AG04449 (cell line): ENCODE measurements at regions of chr7 and their contacts with region 1.

Region 1: DNA sequence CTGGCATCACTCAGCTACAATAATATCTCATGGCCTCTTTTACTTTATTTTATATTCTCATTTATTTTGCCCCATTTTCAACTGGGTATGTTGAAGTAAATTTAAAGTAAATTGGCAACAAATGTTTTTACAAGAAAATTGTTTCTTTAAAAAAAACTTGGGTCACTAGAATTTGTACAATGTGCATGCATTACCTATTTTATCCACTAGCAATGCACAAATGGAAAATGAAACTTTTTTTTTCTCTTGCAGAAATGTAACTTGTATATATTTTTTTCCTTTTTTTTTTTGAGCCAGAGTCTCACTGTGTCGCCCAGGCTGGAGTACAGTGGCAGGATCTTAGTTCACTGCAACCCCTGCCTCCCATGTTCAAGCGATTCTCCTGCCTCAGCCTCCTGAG is 10.3 kb upstream of the H2AZ2 start:
- DNase-seq: no peak
- H3K4me3 ChIP-seq: no peak overlapping the region
- CTCF ChIP-seq: no peak

Region 2: DNA sequence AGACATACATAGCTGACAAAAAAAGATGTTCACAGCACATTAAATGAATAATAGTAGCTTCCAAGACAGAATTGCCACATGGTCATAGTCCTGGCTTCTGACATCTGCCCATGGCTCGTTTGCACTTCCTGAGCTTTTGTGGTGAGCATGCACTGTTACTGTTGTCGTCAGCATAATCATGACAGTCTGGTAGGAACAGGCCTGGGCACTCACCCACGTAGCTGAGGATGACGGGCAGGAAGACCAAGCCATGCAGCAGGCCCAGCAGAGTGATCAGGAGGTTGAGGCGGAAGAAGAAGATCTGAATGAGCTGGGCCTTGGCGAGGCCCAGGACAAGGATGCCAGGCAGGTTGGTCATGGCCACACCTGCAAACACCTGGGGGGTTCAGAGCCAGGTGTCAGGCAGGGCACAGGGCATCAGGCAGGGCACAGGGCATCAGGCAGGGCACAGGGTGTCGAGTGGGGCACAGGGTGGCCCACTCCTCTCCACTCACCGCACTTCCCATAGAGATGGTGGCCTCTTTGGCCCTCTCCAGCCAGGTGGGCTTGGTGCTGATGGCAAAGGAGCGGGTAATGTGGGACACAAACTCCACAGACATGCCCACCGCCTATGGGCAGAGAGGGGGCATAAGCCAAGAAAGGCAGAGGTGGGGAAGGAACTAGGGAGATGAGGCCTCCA is 342.4 kb before region 1 on chr7:
- CTCF ChIA-PET with region 1: no interaction called
- POLR2A ChIA-PET with region 1: no interaction called
- DNase-seq: no peak
- H3K4me3 ChIP-seq: no peak overlapping the region
- CTCF ChIP-seq: no peak

Region 3: GRCh38 chr7:44876393-44876792 is 18.2 kb after region 1 on chr7:
- CTCF ChIA-PET with region 1: interaction called, 43 read pairs
- POLR2A ChIA-PET with region 1: interaction called, 4 read pairs
- DNase-seq: no peak
- H3K4me3 ChIP-seq: no peak overlapping the region
- CTCF ChIP-seq: no peak

Region 4: DNA sequence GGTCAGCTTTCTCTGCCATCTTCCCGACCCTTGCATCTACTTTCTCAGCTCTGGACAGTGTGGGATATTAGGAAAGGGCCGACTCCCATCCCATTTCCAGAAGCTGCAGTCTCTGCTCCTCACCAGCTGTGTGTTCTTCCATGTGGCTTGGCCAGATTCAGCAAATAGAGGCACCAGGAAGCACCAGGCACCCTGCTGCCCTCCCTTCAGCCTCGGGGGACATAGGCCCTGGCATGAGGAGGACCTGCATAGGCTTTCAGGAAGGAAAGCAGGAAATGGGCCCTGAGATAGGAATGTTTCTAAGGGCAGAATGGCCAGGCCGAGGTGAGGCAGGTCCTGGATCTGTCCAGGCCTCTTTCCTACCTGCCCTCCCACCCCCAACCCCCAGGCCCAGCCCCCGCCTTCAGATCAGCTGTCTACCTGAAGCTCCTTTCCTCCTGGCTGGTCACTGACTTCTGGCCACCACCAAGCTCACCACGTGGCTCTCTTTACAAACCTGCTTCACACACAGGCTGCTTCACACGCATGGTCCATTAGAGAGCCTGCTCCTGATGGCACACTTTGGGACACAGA is 54.7 kb after region 1 on chr7:
- CTCF ChIA-PET with region 1: interaction called, 211 read pairs
- POLR2A ChIA-PET with region 1: no interaction called
- DNase-seq: no peak
- H3K4me3 ChIP-seq: no peak overlapping the region
- CTCF ChIP-seq: no peak

Region 5: DNA sequence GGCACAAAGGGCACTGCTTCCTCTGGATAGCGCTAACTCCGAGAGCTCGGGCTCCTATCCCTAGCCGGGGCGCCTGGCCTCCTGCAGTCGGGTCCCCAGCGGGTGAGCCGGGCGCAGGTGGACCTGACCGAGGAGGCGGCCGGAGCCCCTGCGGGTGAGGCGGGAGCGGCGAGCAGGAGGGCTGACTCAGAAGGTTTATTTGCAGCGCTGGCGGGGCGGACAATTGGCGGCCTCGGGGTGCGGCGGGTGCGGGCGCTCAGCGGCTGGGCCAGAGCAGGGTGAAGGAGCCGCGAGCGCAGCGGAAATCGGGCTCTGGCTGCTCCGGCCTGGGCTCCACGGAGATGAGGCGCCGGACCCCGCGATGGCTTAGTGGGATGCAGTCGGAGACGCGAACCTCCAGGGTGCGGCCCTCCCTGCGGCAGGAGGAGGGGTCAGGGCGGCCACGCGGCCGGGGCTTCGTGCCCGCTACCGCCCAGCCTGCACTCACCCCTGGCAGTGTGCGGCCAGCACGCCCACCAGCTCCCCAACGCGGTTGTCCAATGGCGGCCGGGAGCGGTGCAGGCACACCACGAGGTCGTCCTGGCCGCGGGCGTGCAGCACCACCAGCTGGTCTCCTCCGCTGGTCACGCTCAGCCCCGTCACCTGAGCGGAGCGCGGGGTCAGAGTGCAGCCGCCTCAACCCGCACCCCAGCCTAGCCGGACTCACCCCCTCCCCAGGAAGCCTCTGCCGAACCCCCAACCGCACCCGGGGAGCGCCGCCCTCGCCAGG is 104.5 kb after region 1 on chr7:
- CTCF ChIA-PET with region 1: interaction called, 17 read pairs
- POLR2A ChIA-PET with region 1: no interaction called
- DNase-seq: no peak
- H3K4me3 ChIP-seq: peak overlapping the region; percentile 48
- CTCF ChIP-seq: peak; percentile 15